Activated CD4-positive, alpha-beta memory T cell treated with anti-CD3 and anti-CD28 coated beads for 36 hours (primary cell): ENCODE measurements at regions of chr11 and their contacts with region 1.

Region 1: DNA sequence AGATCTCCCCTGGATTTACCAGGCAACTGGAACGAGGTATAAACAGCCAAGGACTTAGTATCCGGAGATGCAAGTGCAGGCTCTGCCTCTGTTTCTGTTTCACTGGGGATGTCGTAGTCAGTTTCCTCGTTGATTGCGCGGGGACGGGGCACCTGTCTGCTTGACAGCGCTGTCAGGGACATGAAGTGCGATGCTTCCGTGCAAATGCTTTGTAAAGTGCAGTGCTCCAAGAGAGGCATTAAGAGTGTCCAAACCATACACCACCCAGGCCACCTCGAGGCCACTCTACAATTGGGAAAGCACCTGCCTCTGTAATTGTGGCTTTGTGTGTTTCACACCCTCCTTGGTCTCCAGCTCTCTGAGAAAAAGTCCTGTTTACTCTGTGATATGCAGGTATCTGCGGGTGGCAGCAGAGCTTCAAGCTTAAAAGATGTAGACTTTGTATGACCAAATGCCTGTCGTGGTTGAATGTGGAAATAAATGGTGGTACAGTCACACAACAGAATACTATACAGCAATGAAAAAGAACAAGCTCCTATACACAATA is 18.6 kb upstream of the CD5 start:
- DNase-seq: peak; percentile 84
- H3K4me3 Mint-ChIP-seq: peak overlapping the region; percentile 85
- H3K27ac Mint-ChIP-seq: peak overlapping the region; percentile 92
- H3K4me1 Mint-ChIP-seq: peaks cover 58% of the 10 kb centered on the region
- H3K27me3 Mint-ChIP-seq: no peaks in the 10 kb centered on the region

Region 2: DNA sequence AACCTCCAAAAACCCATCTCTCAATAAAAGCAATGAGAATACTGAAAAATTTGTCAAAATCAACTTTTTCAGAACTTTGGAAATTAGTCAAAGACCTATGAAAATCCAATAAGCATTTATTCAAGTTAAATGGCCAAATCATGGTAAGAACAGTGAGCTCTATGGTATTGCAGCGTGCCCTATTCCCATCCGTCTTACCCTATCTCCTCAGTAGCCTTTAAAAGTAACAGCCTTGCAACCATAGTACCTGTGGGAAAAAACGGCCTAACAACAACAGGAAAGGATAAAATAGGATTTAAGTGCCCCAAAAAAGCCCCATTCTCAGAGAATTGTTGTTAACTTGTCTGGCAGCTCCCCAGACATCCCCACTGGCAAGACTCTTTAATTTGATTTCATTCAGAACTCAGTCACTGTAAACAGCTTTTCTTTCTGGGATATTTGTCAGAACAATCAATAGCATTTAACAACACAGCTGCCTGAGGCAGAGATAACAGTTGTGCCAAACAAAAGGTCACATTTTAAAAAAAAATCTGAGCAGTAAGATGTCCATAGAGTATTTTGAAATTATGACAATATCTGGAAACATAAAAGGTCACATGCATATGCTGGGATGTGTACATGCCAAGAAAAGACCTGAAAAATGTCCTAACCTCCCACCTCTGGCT is 403.1 kb before region 1 on chr11:
- CTCF ChIA-PET with region 1: no interaction called
- POLR2A ChIA-PET with region 1: no interaction called
- intact Hi-C with region 1: no loop called
- DNase-seq: no peak
- H3K4me3 Mint-ChIP-seq: no peak overlapping the region
- H3K27ac Mint-ChIP-seq: no peak overlapping the region
- H3K4me1 Mint-ChIP-seq: no peaks in the 10 kb centered on the region
- H3K27me3 Mint-ChIP-seq: peaks cover 9% of the 10 kb centered on the region

Region 3: DNA sequence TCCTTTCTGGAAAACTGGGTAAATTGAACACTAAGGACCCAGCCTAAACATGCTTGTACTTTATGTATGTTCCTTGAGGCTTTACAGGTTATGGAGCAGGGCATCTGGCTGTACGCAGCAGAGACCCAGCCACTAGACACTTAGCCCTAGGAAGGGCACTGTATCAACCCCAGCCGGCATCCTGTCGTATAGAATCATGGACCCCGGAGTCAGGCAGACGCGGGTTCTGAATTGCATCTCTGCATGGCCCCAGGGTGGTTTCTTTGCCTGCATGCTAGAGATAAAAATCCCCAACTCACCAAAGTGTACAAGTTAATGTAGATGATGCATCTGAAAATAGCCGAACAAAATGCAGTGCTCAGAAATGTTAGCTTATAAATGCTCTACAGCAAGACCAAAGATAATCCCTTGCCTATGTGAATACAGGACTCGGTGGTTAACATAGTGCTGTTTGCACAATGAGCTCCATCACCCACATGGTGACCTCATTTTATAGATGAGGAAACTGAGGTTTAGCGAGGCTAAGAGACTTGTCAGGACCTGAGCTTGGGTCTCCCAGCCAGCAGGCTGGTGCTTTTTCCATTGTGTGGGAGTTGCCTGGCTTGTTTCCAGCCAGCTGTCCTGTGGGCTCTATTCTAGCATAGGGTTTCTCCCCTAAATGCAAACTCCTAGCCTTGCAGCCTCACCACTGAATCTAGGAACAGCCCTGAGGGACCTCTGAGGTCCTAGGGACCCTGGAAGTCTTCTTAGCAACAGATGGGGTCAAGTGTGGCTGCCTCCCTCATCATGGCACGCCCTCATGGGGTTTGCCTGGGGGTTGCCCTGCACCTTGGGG is 104.9 kb before region 1 on chr11:
- CTCF ChIA-PET with region 1: interaction called, 4 read pairs
- POLR2A ChIA-PET with region 1: interaction called, 16 read pairs
- intact Hi-C with region 1: no loop called
- DNase-seq: peak; percentile 92
- H3K4me3 Mint-ChIP-seq: peak overlapping the region; percentile 95
- H3K27ac Mint-ChIP-seq: peak overlapping the region; percentile 99
- H3K4me1 Mint-ChIP-seq: peaks cover 71% of the 10 kb centered on the region
- H3K27me3 Mint-ChIP-seq: no peaks in the 10 kb centered on the region

Region 4: DNA sequence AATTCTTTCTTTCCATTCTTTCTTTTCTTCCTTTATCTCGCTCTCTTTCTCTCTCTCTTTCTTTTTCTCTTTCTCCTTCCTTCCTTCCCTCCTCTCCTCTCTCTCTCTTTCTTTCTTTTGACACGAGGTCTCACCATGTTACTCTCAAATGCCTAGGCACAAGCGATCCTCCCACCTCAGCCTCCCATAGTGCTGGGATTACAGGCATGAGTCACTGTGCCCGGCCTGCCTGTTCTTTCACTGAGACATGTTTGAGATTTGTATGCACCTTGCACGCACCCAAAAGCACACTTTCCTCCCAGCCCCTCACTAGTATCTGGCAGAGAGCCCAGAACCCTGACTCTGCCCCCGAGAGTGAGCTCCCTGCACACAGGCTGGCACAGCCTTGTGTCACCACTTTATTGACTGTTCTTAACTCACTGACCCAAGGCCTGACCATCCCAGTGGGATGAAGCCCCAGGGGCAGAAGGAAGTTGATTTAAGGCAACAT is 55.4 kb before region 1 on chr11:
- CTCF ChIA-PET with region 1: no interaction called
- POLR2A ChIA-PET with region 1: interaction called, 21 read pairs
- intact Hi-C with region 1: loop called (anchors 2 kb)
- DNase-seq: peak; percentile 88
- H3K4me3 Mint-ChIP-seq: peak overlapping the region; percentile 83
- H3K27ac Mint-ChIP-seq: peak overlapping the region; percentile 96
- H3K4me1 Mint-ChIP-seq: peaks cover 77% of the 10 kb centered on the region
- H3K27me3 Mint-ChIP-seq: no peaks in the 10 kb centered on the region

Region 5: DNA sequence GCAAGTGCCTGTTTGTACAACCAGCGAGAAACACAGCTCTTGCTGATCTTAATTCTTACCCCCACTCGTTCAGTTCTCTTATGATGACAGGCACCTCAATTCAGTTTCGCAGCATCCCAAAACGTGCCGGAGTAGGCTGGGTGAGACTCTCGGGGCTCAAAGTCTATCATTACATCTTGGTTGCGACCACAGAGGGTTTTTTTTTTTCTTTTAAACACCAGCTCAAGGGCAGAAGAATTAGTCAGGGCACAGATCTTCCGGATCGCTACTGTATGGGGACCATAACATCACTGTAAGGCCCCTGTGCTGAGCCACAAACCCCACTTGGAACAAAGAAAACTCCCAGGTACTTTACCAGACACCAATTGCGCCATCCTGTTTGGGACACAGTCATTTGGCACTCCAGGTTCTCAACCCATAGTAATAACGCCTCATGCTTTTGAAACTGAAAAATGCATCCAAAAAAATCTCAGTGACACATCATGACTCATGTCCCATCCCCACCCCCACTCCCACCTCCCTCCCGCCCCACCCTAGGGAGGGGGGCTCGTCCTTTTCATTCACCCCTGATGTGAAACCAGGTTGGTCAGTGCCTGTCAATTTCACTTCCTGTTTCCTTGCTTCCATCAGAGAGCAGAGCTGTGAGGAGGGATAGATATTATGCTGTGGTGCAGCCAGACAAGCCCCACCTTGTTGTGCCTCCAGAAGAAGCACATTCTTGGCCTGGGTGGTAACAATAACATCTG is 22.4 kb before region 1 on chr11:
- CTCF ChIA-PET with region 1: interaction called, 6 read pairs
- POLR2A ChIA-PET with region 1: interaction called, 55 read pairs
- intact Hi-C with region 1: loop called (anchors 2 kb)
- DNase-seq: peak; percentile 94
- H3K4me3 Mint-ChIP-seq: peak overlapping the region; percentile 67
- H3K27ac Mint-ChIP-seq: peak overlapping the region; percentile 98
- H3K4me1 Mint-ChIP-seq: peaks cover 92% of the 10 kb centered on the region
- H3K27me3 Mint-ChIP-seq: no peaks in the 10 kb centered on the region

Region 6: GRCh38 chr11:61111786-61112517 is 28.3 kb after region 1 on chr11:
- CTCF ChIA-PET with region 1: interaction called, 10 read pairs
- POLR2A ChIA-PET with region 1: interaction called, 88 read pairs
- intact Hi-C with region 1: loop called (anchors 2 kb)
- DNase-seq: peak; percentile 89
- H3K4me3 Mint-ChIP-seq: no peak overlapping the region
- H3K27ac Mint-ChIP-seq: no peak overlapping the region
- H3K4me1 Mint-ChIP-seq: peaks cover 97% of the 10 kb centered on the region
- H3K27me3 Mint-ChIP-seq: no peaks in the 10 kb centered on the region

Region 7: GRCh38 chr11:61187505-61188130 is 103.9 kb after region 1 on chr11:
- CTCF ChIA-PET with region 1: interaction called, 5 read pairs
- POLR2A ChIA-PET with region 1: no interaction called
- intact Hi-C with region 1: loop called (anchors 2 kb)
- DNase-seq: peak; percentile 85
- H3K4me3 Mint-ChIP-seq: peak overlapping the region; percentile 33
- H3K27ac Mint-ChIP-seq: no peak overlapping the region
- H3K4me1 Mint-ChIP-seq: peaks cover 2% of the 10 kb centered on the region
- H3K27me3 Mint-ChIP-seq: peaks cover 3% of the 10 kb centered on the region